K562 (cell line): ENCODE measurements at regions of chr7 and their contacts with region 1.

Region 1: GRCh38 chr7:27593226-27593625 is 69.5 kb downstream of the HIBADH start:
- DNase-seq: no peak
- ATAC-seq: no peak
- H3K4me3 ChIP-seq: no peak overlapping the region
- H3K27ac ChIP-seq: no peak overlapping the region
- H3K4me1 ChIP-seq: no peaks in the 10 kb centered on the region
- H3K27me3 ChIP-seq: no peaks in the 10 kb centered on the region
- CTCF ChIP-seq: no peak
- EP300 ChIP-seq: no peak
- POLR2A ChIP-seq: no peak
- RAD21 ChIP-seq: no peak

Region 2: DNA sequence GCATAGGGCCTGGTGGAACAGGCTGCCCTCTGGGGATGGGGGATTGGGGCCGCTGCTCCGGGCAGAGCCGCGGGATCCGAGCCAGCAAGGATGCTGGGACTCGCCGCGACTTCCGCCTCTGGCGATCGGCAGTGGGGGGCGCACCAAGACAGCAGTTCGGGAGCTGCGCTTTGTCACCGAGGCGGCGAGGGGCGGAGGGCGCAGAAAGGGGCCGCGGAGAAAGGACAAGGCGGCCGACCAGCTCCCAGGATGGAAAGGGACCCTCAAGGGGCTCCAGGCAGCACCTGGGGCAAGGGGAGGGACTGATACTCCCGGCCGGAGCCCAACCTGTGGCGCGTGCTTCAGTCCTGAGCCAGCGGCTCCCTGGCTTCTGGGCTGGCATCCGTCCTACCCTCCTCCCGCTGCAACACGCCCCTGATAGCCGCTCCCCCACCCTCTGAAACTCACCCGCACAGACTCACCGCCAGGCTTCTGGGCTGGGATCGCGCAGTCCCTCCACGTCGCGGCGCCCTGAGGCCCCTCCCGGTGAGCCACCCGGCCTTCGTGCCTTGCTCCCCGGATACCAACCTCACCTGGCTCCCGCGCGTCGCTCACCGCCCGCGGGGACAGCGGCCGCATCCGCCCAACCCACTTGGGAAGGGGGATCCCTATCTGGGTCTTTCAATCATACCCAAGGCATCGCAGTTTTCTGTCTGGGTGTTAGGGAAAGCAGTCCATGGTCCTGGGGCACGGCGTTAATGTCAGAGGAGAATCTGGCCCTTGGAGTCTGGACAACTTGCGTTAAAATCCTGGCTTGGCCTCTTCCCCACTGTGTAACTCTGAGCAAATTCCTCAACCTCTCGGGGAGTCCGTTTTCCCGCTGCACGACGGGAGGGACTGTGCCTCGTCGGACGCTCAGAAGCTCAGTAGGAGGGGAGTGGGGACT is 357.6 kb before region 1 on chr7:
- CTCF ChIA-PET with region 1: no interaction called
- POLR2A ChIA-PET with region 1: no interaction called
- in situ Hi-C with region 1: no loop called
- intact Hi-C with region 1: no loop called
- DNase-seq: peak; percentile 30 to 35 (median 32)
- ATAC-seq: peak; percentile 72
- H3K4me3 ChIP-seq: no peak overlapping the region
- H3K27ac ChIP-seq: no peak overlapping the region
- H3K4me1 ChIP-seq: peaks cover 0 to 15% of the 10 kb centered on the region in 2 experiments; a peak in 2 of 5 replicates
- H3K27me3 ChIP-seq: peaks cover 42 to 66% of the 10 kb centered on the region in 2 experiments
- CTCF ChIP-seq: peak; percentile 41 to 60 (median 48); a peak in 5 of 6 replicates
- EP300 ChIP-seq: no peak
- POLR2A ChIP-seq: no peak
- RAD21 ChIP-seq: peak; percentile 40 to 58

Region 3: DNA sequence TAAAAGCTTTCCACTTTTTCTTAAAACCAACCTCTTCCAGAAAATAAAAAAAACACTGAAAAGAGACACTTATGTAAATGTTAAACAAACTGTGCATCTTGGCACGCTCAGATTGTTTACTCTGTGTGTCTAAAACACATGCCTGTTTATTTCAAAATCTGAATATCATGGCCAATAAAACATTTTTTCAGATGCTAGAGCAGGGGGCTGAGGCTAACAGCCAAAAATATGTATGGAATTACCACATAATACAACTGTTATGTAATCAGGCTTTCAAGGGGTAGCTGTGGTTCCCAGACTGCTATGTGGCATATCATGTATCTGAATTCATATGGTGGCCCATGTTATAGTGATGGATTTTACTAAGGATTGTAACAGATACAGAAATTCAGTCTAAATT is 60.9 kb before region 1 on chr7:
- CTCF ChIA-PET with region 1: no interaction called
- POLR2A ChIA-PET with region 1: no interaction called
- in situ Hi-C with region 1: no loop called
- intact Hi-C with region 1: loop called (anchors 10 kb)
- DNase-seq: no peak
- ATAC-seq: no peak
- H3K4me3 ChIP-seq: no peak overlapping the region
- H3K27ac ChIP-seq: no peak overlapping the region
- H3K4me1 ChIP-seq: no peaks in the 10 kb centered on the region
- H3K27me3 ChIP-seq: no peaks in the 10 kb centered on the region
- CTCF ChIP-seq: no peak
- EP300 ChIP-seq: no peak
- POLR2A ChIP-seq: no peak
- RAD21 ChIP-seq: no peak